Body of pancreas (tissue), 4 donors: ENCODE measurements at regions of chr11 and their contacts with region 1.

Region 1: DNA sequence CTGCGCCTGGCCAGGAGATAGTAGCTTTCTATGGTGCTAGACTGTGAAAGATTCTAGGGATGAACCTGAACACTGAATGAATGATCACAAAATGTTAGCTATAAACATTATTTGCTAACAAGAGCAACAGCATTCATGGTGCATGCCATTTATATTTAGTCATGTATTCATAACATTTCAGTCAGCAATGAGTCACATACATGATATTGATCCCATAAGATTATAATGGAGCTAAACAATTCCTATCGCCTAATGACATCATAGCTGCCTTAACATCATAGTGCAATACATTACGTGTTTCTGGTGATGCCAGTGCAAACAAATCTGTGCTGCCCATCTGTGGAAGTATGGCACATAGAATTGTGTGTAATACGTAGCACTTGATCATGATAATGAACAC is 164.1 kb downstream of the ARHGAP42 start:
- DNase-seq: no peak
- ATAC-seq: no peak
- H3K4me3 ChIP-seq: no peak overlapping the region
- H3K27ac ChIP-seq: peak overlapping the region in 1 of 4 donors; percentile 30
- H3K4me1 ChIP-seq: peaks cover 13% of the 10 kb centered on the region
- H3K27me3 ChIP-seq: no peaks in the 10 kb centered on the region
- CTCF ChIP-seq: no peak
- POLR2A ChIP-seq: no peak

Region 2: DNA sequence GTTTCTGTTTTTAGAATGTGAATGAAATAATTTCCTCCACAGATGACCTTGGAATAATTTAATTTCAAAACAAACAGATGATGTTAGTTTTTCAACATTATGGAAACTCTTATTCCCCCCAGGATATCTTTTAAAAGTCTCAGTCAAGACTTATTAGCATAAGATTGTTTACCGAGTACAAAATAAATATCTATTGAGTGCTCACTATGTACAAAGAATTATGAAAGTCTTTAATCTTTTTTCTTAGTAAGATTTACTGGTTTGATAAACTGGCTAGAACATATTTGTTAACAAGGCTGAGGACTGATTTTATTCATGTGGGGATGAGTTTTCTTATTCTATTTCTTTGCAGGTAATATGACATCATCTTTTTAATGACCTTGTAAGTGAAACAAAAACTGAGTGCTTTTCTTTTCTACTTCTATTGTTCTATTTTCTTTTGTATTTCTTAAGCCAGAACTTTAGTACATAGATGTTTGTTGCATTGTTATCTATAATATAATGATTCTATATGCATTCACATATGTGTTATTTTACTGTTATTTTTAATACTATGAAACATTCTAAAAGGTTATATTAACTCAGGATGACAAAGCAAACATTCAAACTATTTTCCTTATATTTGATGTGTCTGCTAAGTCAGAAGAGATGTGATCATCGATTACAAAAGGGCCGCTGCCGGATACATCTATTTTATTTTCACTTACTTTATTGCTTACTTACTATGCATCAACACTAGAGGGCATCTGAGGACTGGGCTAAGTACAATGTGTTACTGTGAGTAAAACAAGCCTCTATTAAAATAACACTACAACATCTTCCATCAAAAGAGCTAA is 275.1 kb before region 1 on chr11:
- intact Hi-C with region 1: loop called (anchors 5 kb)
- DNase-seq: peak in 1 of 4 donors; percentile 33
- ATAC-seq: peak; percentile 69
- H3K4me3 ChIP-seq: no peak overlapping the region
- H3K27ac ChIP-seq: no peak overlapping the region
- H3K4me1 ChIP-seq: no peaks in the 10 kb centered on the region
- H3K27me3 ChIP-seq: no peaks in the 10 kb centered on the region
- CTCF ChIP-seq: peak; percentile 38 to 78 (median 72)
- POLR2A ChIP-seq: no peak